Dendritic cell treated with granulocyte-macrophage colony-stimulating factor and Interleukin-4, amounts not matched to agents 40 ng/mL and 50 ng/mL, for 4 days (primary cell): ENCODE measurements at regions of chr2 and their contacts with region 1.

Region 1: DNA sequence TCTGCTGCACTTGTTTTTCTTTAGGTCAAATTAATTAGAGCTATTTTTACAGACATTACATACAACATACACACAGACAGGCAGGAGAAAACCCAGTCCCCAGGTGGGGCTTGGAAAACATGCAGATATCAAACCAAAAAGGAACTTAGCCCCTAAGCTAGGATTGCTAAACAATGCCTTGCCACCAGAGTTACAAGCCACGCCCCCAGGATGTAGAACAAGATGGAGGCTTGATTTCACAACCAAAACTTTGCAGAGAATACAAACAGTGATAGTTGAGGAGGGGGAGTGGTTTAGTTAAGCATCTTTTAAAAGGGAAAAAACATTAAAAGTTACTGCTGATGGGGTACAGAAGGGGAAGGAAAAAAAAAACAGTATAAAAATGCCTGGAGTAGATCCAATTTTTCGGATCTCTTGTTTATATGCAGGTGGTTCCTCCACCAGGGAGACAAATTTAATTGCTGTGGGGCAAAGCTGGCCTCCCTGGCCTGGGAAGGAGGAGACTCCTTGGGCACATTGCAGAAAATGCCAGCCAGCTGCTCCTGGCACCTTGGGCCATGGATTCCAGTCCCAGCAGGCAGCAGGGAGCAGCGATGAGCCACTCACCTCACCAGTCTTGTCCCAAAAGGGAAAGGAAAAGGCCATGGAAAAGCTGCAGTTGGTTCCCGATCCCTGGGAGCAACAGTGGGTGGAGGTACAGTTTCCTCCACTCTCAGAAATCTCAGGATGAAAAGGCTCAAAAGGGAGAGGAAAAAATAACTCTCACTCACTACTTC is 348.4 kb upstream of the REG3G start:
- H3K4me3 Mint-ChIP-seq: no peak overlapping the region
- H3K27ac Mint-ChIP-seq: no peak overlapping the region
- H3K4me1 Mint-ChIP-seq: peaks cover 6% of the 10 kb centered on the region
- H3K27me3 Mint-ChIP-seq: no peaks in the 10 kb centered on the region

Region 2: GRCh38 chr2:78576409-78576808 is 100.7 kb before region 1 on chr2:
- intact Hi-C with region 1: no loop called
- H3K4me3 Mint-ChIP-seq: no peak overlapping the region
- H3K27ac Mint-ChIP-seq: no peak overlapping the region
- H3K4me1 Mint-ChIP-seq: no peaks in the 10 kb centered on the region
- H3K27me3 Mint-ChIP-seq: no peaks in the 10 kb centered on the region

Region 3: GRCh38 chr2:78861546-78861945 is 184.4 kb after region 1 on chr2:
- intact Hi-C with region 1: loop called (anchors 5 kb)
- H3K4me3 Mint-ChIP-seq: no peak overlapping the region
- H3K27ac Mint-ChIP-seq: no peak overlapping the region
- H3K4me1 Mint-ChIP-seq: no peaks in the 10 kb centered on the region
- H3K27me3 Mint-ChIP-seq: peaks cover 1% of the 10 kb centered on the region

Region 4: DNA sequence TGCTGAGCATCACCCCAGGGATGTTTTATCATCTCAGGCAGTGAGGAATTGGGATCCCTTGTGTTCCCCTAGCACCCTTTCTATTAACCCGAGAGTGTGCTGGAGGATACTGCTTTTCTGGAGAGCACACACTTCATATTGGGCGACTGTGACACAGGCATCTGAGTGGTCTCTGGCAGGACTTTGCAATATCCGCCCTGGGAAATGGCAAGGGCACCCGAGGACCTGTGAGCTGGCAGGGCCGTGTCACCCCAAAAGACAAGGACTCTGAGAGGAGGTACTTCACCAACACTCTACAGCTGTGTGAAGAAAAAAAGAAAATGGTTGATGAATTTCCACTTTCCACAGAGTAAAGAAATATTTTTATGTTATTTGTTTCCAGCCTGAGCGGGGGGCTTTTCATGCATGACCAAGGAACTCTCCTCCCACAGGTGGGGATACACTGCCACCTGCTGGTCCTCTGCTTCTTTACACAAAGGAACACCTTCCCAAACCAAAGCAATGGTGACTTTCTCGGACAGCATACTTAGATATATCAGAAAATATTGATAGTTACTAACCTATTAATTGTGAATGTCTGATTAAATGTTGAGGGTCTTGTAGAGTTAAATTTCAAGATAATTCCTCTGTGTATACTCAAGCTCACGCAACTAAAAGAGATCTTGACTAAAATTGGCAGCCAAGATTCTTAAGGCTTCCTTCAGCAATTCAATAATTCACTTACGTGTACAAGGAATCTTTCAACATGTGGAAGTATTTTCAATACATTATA is 302.5 kb after region 1 on chr2:
- intact Hi-C with region 1: loop called (anchors 1 kb)
- H3K4me3 Mint-ChIP-seq: no peak overlapping the region
- H3K27ac Mint-ChIP-seq: no peak overlapping the region
- H3K4me1 Mint-ChIP-seq: peaks cover 30% of the 10 kb centered on the region
- H3K27me3 Mint-ChIP-seq: peaks cover 3% of the 10 kb centered on the region